ENCODE measurements at regions of chrX and their contacts with region 1.

Region 1: DNA sequence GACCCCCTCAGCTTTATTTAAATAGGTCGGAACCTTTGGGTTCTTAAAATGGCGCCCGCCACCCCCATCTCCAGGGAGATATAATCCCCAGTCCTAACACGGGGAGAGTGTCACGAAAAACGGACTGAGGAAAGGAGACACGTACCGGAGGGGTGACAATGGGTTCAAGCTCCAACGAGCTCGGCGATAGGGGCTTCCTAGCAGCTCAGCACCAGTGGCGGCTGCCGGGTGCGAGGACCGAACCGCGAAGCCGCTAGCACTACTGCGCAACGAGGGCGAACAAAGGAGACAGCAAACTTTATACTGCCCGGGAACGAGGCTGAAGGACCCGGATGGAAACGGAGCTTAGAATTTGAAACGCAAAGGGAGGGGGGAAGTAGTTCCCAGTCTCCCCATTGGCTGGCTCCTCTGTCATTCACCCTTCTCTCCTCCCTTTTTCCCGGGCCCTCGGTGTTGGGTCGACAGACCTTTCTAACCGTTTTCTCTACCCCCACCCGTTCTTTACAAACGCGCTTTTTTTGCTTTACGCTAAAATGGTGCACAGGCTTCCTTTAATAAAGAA is at the start of gene RBMX:
- DNase-seq: peak; percentile 87
- H3K4me3 Mint-ChIP-seq: peak within 1 kb of the TSS; percentile 98
- H3K27ac Mint-ChIP-seq: peak within 1 kb of the TSS; percentile 98
- H3K4me1 Mint-ChIP-seq: peaks cover 20% of the 10 kb centered on the region
- H3K27me3 Mint-ChIP-seq: no peaks in the 10 kb centered on the region
- total RNA-seq, gene RBMX: 287 and 311 TPM in 2 replicates

Region 2: DNA sequence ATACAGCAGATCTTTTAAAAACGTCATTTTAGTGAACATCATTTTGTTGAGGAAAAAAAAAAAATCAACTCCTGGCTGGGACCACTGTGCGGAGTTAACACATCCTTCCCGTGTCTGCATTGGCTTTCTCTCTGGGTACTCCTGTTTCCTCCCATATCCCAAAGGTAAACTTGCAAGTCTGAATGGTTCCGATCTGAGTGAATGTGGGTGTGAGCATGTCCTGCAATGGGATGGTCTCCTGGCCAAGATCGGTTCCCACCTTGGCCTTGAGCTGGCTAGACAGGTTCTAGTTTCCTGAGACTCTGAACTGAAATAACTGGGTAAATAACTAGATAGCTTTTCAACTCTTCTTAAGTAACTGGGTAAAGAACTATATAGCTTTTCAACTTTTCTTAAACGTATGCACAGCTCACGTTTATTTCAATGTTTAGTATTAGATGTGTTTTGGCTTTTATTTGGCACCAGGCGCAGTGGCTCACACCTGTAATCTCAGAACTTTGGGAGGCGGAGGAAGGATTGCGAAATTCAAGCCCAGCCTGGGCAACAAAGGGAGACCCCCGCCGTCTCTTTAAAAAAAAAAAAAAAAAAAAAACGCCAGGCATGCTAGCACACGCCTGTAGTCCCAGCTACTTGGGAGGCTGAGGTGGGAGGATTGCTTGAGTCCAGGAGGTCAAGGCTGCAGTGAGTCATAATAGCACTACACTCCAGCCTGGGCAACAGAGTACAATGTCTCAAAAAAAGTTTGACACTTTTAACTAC is 14.0 kb before region 1 on chrX:
- intact Hi-C with region 1: loop called (anchors 2 kb)
- DNase-seq: no peak
- H3K4me3 Mint-ChIP-seq: no peak overlapping the region
- H3K27ac Mint-ChIP-seq: peak overlapping the region; percentile 28
- H3K4me1 Mint-ChIP-seq: peaks cover 28% of the 10 kb centered on the region
- H3K27me3 Mint-ChIP-seq: no peaks in the 10 kb centered on the region

Region 3: DNA sequence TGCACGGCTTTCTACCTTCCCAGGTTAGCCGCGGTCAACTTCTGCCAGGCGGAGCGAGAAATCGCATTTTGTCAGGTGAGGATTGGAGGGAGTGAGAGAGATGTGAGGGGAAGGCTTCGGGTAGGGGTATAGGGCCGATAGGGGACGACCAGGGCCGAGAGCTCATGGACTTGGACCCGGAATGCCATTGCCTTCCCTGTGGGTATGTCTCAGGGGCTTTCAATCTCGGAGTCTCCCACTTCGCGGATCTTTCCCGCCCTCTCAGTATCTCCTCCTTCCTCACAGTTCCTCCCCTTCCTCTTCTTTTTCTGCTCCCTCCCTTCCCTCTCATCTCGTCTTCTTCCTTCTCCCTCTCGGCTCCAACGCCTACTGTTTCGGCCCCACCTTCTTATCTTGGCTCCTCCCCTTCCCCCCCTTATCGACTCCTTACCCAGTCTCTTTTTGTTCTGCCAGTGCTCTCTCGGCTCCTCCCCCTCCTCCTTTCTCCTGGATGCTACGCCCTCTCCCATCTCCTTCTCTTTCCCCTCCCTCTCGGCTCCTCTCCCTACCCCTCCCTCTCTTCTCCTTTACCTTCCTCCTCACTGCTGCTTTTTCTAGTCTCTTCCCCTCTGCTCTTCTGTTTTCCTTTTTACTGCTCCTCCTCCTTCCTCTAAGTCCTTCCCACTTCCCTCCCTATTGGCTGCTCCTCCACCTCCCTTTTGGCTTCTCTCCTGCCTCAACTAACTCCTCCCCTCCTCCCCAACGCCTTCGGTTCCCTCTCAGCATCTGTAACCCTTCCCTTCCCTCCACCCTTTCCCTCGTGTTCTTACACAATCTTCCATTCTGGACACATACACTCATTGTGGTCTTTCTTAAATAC is 29.4 kb after region 1 on chrX:
- intact Hi-C with region 1: loop called (anchors 1 kb)
- DNase-seq: peak; percentile 50
- H3K4me3 Mint-ChIP-seq: peak overlapping the region; percentile 89
- H3K27ac Mint-ChIP-seq: peak overlapping the region; percentile 79
- H3K4me1 Mint-ChIP-seq: peaks cover 12% of the 10 kb centered on the region
- H3K27me3 Mint-ChIP-seq: no peaks in the 10 kb centered on the region

Region 4: GRCh38 chrX:136920001-136920400 is 39.5 kb after region 1 on chrX:
- intact Hi-C with region 1: loop called (anchors 2 kb)
- DNase-seq: no peak
- H3K4me3 Mint-ChIP-seq: no peak overlapping the region
- H3K27ac Mint-ChIP-seq: no peak overlapping the region
- H3K4me1 Mint-ChIP-seq: peaks cover 2% of the 10 kb centered on the region
- H3K27me3 Mint-ChIP-seq: no peaks in the 10 kb centered on the region

Measured in activated T-helper 2 cell treated with anti-CD3 and anti-CD28 coated beads, Interferon-gamma antibody, Interleukin-2, Interleukin-4, amounts not matched to agents 10 μg/mL and 5 μg/mL and 100 μg/mL, durations not matched to agents 14 hours and 24 hours and 36 hours (primary cell).